ENCODE measurements at regions of chr16 and their contacts with region 1.

Region 1: DNA sequence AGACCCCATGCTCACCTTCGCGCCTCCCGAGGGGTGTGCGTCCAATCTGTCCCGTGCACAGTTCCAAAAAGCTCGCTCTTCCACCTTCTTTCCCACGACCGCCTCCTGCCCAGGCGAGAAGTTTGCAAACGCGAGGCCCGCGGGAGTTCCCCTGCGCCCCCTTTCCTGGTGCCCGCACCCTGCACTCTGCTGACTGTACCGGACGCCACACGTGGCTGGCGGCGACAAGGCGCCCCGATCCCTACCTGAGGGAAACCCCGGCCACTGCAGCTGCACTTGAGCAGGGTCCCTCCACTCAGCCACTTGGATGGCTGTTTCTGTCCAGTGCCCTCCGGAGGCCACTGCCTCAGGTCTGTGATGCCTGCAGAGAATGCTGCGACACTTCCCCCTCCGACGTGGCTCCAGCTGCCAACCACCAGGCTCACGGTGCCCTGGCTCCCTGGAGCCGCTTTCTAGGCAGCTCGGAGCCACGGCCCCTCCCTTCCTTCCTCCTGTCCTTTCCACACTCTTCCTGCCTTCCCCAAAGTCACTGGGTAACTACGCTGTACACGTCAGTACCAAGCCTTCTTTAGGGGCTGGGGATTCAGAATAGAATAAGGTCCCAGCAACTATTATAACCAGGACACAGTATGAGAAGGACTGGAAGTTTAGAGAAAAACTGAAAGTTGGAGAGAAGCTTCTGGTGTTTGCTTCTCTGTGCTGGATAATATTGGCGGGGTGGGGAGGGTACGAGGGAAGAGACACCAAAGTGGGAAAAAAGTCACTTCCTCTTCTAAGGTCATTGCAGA is at the start of gene MLKL:
- DNase-seq: peak; percentile 55 to 59
- H3K4me3 ChIP-seq: peak within 1 kb of the TSS; percentile 74
- H3K27ac ChIP-seq: peak within 1 kb of the TSS; percentile 74
- H3K4me1 ChIP-seq: peaks cover 30% of the 10 kb centered on the region
- H3K27me3 ChIP-seq: no peaks in the 10 kb centered on the region
- CTCF ChIP-seq: no peak; the same call in 1 of the 2 replicates
- total RNA-seq, gene MLKL: 6.8 and 11.2 TPM in 2 replicates

Region 2: GRCh38 chr16:74183601-74184360 is 516.9 kb before region 1 on chr16:
- CTCF ChIA-PET with region 1: no interaction called
- POLR2A ChIA-PET with region 1: no interaction called
- intact Hi-C with region 1: no loop called
- DNase-seq: no peak
- H3K4me3 ChIP-seq: no peak overlapping the region
- H3K27ac ChIP-seq: no peak overlapping the region
- H3K4me1 ChIP-seq: no peaks in the 10 kb centered on the region
- H3K27me3 ChIP-seq: 0 out of 2 replicates have a peak, but pooled peaks cover 7% of the 10 kb centered on the region
- CTCF ChIP-seq: no peak

Region 3: GRCh38 chr16:74726716-74727115 is 26.1 kb after region 1 on chr16:
- CTCF ChIA-PET with region 1: no interaction called
- POLR2A ChIA-PET with region 1: interaction called, 15 read pairs
- intact Hi-C with region 1: no loop called
- DNase-seq: no peak
- H3K4me3 ChIP-seq: no peak overlapping the region
- H3K27ac ChIP-seq: no peak overlapping the region
- H3K4me1 ChIP-seq: peaks cover 24% of the 10 kb centered on the region
- H3K27me3 ChIP-seq: no peaks in the 10 kb centered on the region
- CTCF ChIP-seq: peak; percentile 73

Measured in PC-9 (cell line).